CD8-positive, alpha-beta T cell (primary cell): ENCODE measurements at regions of chr1 and their contacts with region 1.

Region 1: DNA sequence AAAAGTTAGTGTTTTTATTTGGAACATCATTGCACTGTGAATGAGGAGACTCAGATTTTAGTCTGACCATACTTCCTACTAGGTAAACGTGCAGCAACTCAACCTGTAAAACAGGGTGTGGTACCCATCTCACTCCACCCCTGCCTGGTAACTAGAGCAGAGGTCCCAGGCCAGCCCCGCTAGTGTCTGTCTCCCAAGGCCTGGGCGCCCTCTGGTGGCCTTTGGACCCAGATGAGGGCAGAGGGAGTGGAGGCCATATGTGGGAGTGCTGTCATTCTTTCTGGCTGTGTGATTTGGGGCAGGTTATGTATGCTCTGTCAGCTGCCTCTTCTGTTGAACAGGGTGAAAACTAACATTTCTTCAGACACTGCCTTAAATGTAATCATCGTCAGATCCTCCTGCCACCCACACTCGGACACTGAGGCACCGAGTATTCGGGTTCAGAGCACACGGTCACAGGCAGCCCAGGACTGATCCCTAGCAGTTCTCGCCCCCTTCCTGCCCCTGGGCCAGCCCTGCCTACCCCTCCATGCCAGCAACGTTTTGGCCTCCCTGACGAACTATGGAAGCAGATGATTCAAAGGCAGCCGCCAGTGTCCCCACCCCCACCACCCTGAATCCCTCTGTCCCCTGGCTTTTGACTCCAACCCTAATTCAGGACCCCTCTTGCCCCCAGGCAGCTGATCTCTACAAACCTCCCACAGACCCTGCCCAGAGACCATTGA is 76.0 kb downstream of the CD247 start:
- DNase-seq: peak; percentile 78 to 91 (median 89)
- ATAC-seq: peak; percentile 80
- H3K4me3 ChIP-seq: no peak overlapping the region
- H3K4me3 Mint-ChIP-seq: no peak overlapping the region
- H3K27ac ChIP-seq: peak overlapping the region in 1 of 2 experiments; percentile 71
- H3K27ac Mint-ChIP-seq: peak overlapping the region; percentile 85
- H3K4me1 ChIP-seq: peaks cover 81% of the 10 kb centered on the region
- H3K4me1 Mint-ChIP-seq: peaks cover 91% of the 10 kb centered on the region
- H3K27me3 ChIP-seq: no peaks in the 10 kb centered on the region
- H3K27me3 Mint-ChIP-seq: no peaks in the 10 kb centered on the region
- CTCF ChIP-seq: peak; percentile 75

Region 2: GRCh38 chr1:167263819-167264464 is 178.3 kb before region 1 on chr1:
- CTCF ChIA-PET with region 1: interaction called, 24 read pairs
- POLR2A ChIA-PET with region 1: no interaction called
- intact Hi-C with region 1: loop called (anchors 1 to 2 kb)
- DNase-seq: peak in 2 of 9 experiments; percentile 6 to 35
- ATAC-seq: peak; percentile 35
- H3K4me3 ChIP-seq: no peak overlapping the region
- H3K4me3 Mint-ChIP-seq: no peak overlapping the region
- H3K27ac ChIP-seq: peak overlapping the region in 1 of 2 experiments; percentile 18
- H3K27ac Mint-ChIP-seq: no peak overlapping the region
- H3K4me1 ChIP-seq: peaks cover 48% of the 10 kb centered on the region
- H3K4me1 Mint-ChIP-seq: peaks cover 34% of the 10 kb centered on the region
- H3K27me3 ChIP-seq: no peaks in the 10 kb centered on the region
- H3K27me3 Mint-ChIP-seq: no peaks in the 10 kb centered on the region
- CTCF ChIP-seq: no peak

Region 3: GRCh38 chr1:167270349-167271092 is 171.8 kb before region 1 on chr1:
- CTCF ChIA-PET with region 1: interaction called, 24 read pairs
- POLR2A ChIA-PET with region 1: no interaction called
- intact Hi-C with region 1: loop called (anchors 1 to 2 kb)
- DNase-seq: no peak
- ATAC-seq: no peak
- H3K4me3 ChIP-seq: no peak overlapping the region
- H3K4me3 Mint-ChIP-seq: no peak overlapping the region
- H3K27ac ChIP-seq: no peak overlapping the region
- H3K27ac Mint-ChIP-seq: no peak overlapping the region
- H3K4me1 ChIP-seq: peaks cover 9% of the 10 kb centered on the region
- H3K4me1 Mint-ChIP-seq: peaks cover 43% of the 10 kb centered on the region
- H3K27me3 ChIP-seq: no peaks in the 10 kb centered on the region
- H3K27me3 Mint-ChIP-seq: no peaks in the 10 kb centered on the region
- CTCF ChIP-seq: no peak

Region 4: GRCh38 chr1:167401260-167401873 is 40.9 kb before region 1 on chr1:
- CTCF ChIA-PET with region 1: interaction called, 25 read pairs
- POLR2A ChIA-PET with region 1: interaction called, 3 read pairs
- intact Hi-C with region 1: loop called (anchors 1 to 2 kb)
- DNase-seq: peak; percentile 4 to 79 (median 51)
- ATAC-seq: peak; percentile 73
- H3K4me3 ChIP-seq: no peak overlapping the region
- H3K4me3 Mint-ChIP-seq: no peak overlapping the region
- H3K27ac ChIP-seq: no peak overlapping the region
- H3K27ac Mint-ChIP-seq: no peak overlapping the region
- H3K4me1 ChIP-seq: no peaks in the 10 kb centered on the region
- H3K4me1 Mint-ChIP-seq: peaks cover 5% of the 10 kb centered on the region
- H3K27me3 ChIP-seq: no peaks in the 10 kb centered on the region
- H3K27me3 Mint-ChIP-seq: no peaks in the 10 kb centered on the region
- CTCF ChIP-seq: peak; percentile 36

Region 5: GRCh38 chr1:167430134-167430856 is 12.0 kb before region 1 on chr1:
- CTCF ChIA-PET with region 1: interaction called, 36 read pairs
- POLR2A ChIA-PET with region 1: interaction called, 6 read pairs
- intact Hi-C with region 1: loop called in 1 of 2 experiments (anchors 2 kb)
- DNase-seq: peak in 3 of 9 experiments; percentile 17 to 65 (median 50)
- ATAC-seq: peak; percentile 33
- H3K4me3 ChIP-seq: no peak overlapping the region
- H3K4me3 Mint-ChIP-seq: no peak overlapping the region
- H3K27ac ChIP-seq: peak overlapping the region in 1 of 2 experiments; percentile 78
- H3K27ac Mint-ChIP-seq: peak overlapping the region; percentile 87
- H3K4me1 ChIP-seq: peaks cover 17% of the 10 kb centered on the region
- H3K4me1 Mint-ChIP-seq: peaks cover 71% of the 10 kb centered on the region
- H3K27me3 ChIP-seq: no peaks in the 10 kb centered on the region
- H3K27me3 Mint-ChIP-seq: no peaks in the 10 kb centered on the region
- CTCF ChIP-seq: no peak

Region 6: DNA sequence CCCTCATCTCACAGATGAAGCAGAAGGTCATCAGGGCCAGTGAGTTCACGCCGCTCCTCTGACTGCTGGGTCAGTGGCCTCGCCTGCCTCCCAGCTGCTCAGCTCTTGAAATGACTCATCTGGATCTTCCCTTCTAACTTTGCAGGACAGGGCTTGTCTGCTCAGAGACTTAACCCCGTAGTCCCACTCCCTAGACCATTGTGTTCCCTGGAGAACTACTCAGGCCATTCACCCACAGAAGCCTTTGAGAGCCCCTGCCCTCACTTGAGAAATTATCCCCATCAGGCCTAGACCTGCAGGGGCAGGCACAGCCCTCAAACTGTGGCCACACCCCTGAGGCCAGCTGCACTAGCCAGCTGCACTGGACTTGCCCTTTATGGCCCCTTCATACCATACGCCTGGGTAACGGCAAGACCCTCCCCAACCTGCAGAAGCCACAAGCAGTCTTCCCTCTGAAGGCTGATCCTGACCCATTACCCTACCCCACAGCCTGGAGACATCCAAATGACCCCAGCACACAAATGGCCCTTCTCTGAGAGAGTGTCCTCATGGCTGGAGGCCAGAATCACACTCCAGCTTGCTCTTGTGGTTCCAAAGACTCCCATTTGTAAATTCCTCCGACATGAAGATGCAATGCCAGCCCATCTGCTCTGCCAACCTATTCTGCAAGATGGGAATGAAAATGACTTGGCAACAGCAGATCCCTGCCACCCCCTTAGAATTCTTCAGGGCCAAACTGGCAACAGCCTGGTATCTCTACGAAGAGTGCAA is 220.9 kb after region 1 on chr1:
- CTCF ChIA-PET with region 1: no interaction called
- POLR2A ChIA-PET with region 1: no interaction called
- intact Hi-C with region 1: no loop called
- DNase-seq: no peak
- ATAC-seq: no peak
- H3K4me3 ChIP-seq: no peak overlapping the region
- H3K4me3 Mint-ChIP-seq: no peak overlapping the region
- H3K27ac ChIP-seq: no peak overlapping the region
- H3K27ac Mint-ChIP-seq: peak overlapping the region; percentile 80
- H3K4me1 ChIP-seq: peaks cover 66% of the 10 kb centered on the region
- H3K4me1 Mint-ChIP-seq: peaks cover 86% of the 10 kb centered on the region
- H3K27me3 ChIP-seq: no peaks in the 10 kb centered on the region
- H3K27me3 Mint-ChIP-seq: no peaks in the 10 kb centered on the region
- CTCF ChIP-seq: no peak

Region 7: GRCh38 chr1:168225476-168226190 is 783.3 kb after region 1 on chr1 and contains the start of gene SFT2D2:
- CTCF ChIA-PET with region 1: no interaction called
- POLR2A ChIA-PET with region 1: no interaction called
- intact Hi-C with region 1: no loop called
- DNase-seq: peak; percentile 46 to 89 (median 77)
- ATAC-seq: peak; percentile 98
- H3K4me3 ChIP-seq: peak within 1 kb of the TSS; percentile 90 to 93
- H3K4me3 Mint-ChIP-seq: peak within 1 kb of the TSS; percentile 94
- H3K27ac ChIP-seq: peak within 1 kb of the TSS; percentile 71 to 75
- H3K27ac Mint-ChIP-seq: peak within 1 kb of the TSS; percentile 93
- H3K4me1 ChIP-seq: peaks cover 37% of the 10 kb centered on the region
- H3K4me1 Mint-ChIP-seq: peaks cover 49% of the 10 kb centered on the region
- H3K27me3 ChIP-seq: no peaks in the 10 kb centered on the region
- H3K27me3 Mint-ChIP-seq: peaks cover 3% of the 10 kb centered on the region
- CTCF ChIP-seq: no peak
- total RNA-seq, gene SFT2D2: 61.2 to 62.3 TPM